ENCODE measurements at regions of chr13 and their contacts with region 1.

Region 1: GRCh38 chr13:99614385-99614885 is 113.2 kb downstream of the TM9SF2 start:
- DNase-seq: peak; percentile 62
- ATAC-seq: peak; percentile 98
- H3K4me3 ChIP-seq: no peak overlapping the region
- H3K4me3 Mint-ChIP-seq: no peak overlapping the region
- H3K27ac ChIP-seq: no peak overlapping the region
- H3K27ac Mint-ChIP-seq: no peak overlapping the region
- H3K4me1 ChIP-seq: peaks cover 4 to 8% of the 10 kb centered on the region in 2 donors
- H3K4me1 Mint-ChIP-seq: peaks cover 26% of the 10 kb centered on the region
- H3K27me3 ChIP-seq: no peaks in the 10 kb centered on the region
- H3K27me3 Mint-ChIP-seq: no peaks in the 10 kb centered on the region
- CTCF ChIP-seq: peak; percentile 19

Region 2: DNA sequence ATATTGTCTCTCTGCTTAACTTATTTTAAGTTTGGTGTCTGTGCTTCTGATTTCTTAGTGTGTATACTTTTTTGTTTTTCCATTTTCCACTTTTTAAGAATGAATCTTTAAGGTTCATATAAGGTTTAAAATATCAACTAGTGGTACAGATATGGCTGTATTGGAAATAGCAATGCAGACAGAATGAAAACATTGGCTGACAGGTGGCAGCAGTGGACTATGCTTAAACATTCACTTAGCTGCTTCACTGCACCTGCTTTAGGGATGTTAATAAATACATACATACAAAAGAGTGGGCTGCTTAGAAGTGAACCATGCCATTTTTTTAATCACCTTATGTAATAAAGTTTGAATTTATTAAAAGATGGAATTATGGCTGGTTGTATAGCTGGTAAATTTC is 85.9 kb before region 1 on chr13:
- CTCF ChIA-PET with region 1: interaction called, 6 read pairs
- POLR2A ChIA-PET with region 1: no interaction called
- intact Hi-C with region 1: loop called (anchors 1 kb)
- DNase-seq: peak; percentile 64
- ATAC-seq: no peak
- H3K4me3 ChIP-seq: no peak overlapping the region
- H3K4me3 Mint-ChIP-seq: no peak overlapping the region
- H3K27ac ChIP-seq: no peak overlapping the region
- H3K27ac Mint-ChIP-seq: no peak overlapping the region
- H3K4me1 ChIP-seq: no peaks in the 10 kb centered on the region
- H3K4me1 Mint-ChIP-seq: peaks cover 11% of the 10 kb centered on the region
- H3K27me3 ChIP-seq: no peaks in the 10 kb centered on the region
- H3K27me3 Mint-ChIP-seq: no peaks in the 10 kb centered on the region
- CTCF ChIP-seq: peak; percentile 52

Measured in B cell (primary cell).